CD8-positive, alpha-beta T cell (primary cell): ENCODE measurements at regions of chr1 and their contacts with region 1.

Region 1: DNA sequence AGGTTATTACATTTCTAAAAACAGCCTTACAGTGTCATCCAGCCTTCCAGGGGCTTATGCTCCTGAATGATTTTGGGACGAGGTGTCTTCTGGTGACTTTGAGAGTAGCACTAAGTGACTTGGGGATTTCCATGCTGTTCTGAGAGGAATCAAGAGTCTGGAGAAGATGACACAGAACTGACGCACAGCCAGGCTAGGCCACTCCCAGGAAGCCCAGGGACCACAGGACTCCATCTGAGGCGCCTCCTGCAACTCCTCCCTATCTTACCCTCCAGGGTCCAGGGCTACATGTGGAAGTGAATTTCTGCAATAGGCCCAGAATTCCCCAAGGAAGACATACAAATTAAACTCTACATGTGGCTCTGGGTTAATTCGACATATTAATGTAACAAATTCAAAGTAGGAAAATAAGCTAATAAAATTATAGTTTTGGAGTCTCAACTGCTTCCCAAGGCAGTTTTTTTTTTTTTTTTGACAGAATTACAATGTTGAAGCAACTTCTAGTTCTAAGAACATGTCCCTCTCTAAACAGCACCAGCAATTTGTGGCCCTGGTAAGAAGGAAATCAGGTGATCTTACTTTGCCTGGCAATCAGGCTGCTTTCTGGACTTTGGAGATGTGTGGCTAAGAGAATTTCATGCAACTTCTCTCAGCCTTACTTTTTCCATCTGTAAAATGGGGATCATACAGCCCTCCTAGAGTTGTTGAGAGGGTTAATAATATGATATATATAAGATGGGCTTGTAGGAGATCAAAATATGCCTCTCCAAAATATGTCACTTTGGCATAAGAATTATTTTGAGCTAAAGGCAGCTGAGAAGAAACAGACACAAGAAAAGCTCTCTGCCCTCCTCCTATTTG is 92.3 kb downstream of the SLC25A24 start:
- DNase-seq: peak in 4 of 9 experiments; percentile 17 to 57 (median 40)
- ATAC-seq: peak; percentile 54
- H3K4me3 ChIP-seq: no peak overlapping the region
- H3K4me3 Mint-ChIP-seq: no peak overlapping the region
- H3K27ac ChIP-seq: no peak overlapping the region
- H3K27ac Mint-ChIP-seq: peak overlapping the region; percentile 57
- H3K4me1 ChIP-seq: no peaks in the 10 kb centered on the region
- H3K4me1 Mint-ChIP-seq: peaks cover 4% of the 10 kb centered on the region
- H3K27me3 ChIP-seq: no peaks in the 10 kb centered on the region
- H3K27me3 Mint-ChIP-seq: no peaks in the 10 kb centered on the region
- CTCF ChIP-seq: no peak

Region 2: DNA sequence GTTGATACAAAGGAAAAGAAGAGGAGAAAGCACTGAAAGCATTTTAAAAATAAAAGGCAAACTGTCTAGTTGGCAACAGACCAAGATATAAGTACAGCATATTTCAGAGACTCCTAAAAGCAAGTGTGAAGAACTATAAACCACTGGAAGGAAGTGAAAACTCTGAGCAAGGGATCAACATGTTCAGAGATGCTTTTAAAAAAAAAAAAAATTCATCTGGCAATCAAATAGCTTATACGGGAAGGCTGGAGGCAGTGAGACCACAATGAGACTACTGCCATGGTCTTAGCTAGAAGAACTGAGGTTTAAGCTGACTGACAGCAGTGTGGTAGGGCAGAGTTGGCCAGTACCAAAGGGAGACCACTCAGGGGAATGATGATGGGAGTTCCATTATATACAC is 267.2 kb before region 1 on chr1:
- CTCF ChIA-PET with region 1: no interaction called
- POLR2A ChIA-PET with region 1: no interaction called
- intact Hi-C with region 1: no loop called
- DNase-seq: peak in 2 of 9 experiments; percentile 37 to 63
- ATAC-seq: peak; percentile 50
- H3K4me3 ChIP-seq: peak overlapping the region; percentile 2 to 6
- H3K4me3 Mint-ChIP-seq: peak overlapping the region; percentile 42
- H3K27ac ChIP-seq: peak overlapping the region in 1 of 2 experiments; percentile 73
- H3K27ac Mint-ChIP-seq: peak overlapping the region; percentile 81
- H3K4me1 ChIP-seq: peaks cover 64% of the 10 kb centered on the region
- H3K4me1 Mint-ChIP-seq: peaks cover 87% of the 10 kb centered on the region
- H3K27me3 ChIP-seq: no peaks in the 10 kb centered on the region
- H3K27me3 Mint-ChIP-seq: no peaks in the 10 kb centered on the region
- CTCF ChIP-seq: no peak

Region 3: GRCh38 chr1:108057541-108057940 is 50.3 kb before region 1 on chr1:
- CTCF ChIA-PET with region 1: no interaction called
- POLR2A ChIA-PET with region 1: interaction called, 3 read pairs
- intact Hi-C with region 1: loop called in 1 of 2 experiments (anchors 10 kb)
- DNase-seq: no peak
- ATAC-seq: no peak
- H3K4me3 ChIP-seq: no peak overlapping the region
- H3K4me3 Mint-ChIP-seq: no peak overlapping the region
- H3K27ac ChIP-seq: no peak overlapping the region
- H3K27ac Mint-ChIP-seq: no peak overlapping the region
- H3K4me1 ChIP-seq: no peaks in the 10 kb centered on the region
- H3K4me1 Mint-ChIP-seq: no peaks in the 10 kb centered on the region
- H3K27me3 ChIP-seq: no peaks in the 10 kb centered on the region
- H3K27me3 Mint-ChIP-seq: no peaks in the 10 kb centered on the region
- CTCF ChIP-seq: no peak

Region 4: GRCh38 chr1:108097018-108097417 is 10.9 kb before region 1 on chr1:
- CTCF ChIA-PET with region 1: no interaction called
- POLR2A ChIA-PET with region 1: no interaction called
- intact Hi-C with region 1: no loop called
- DNase-seq: no peak
- ATAC-seq: no peak
- H3K4me3 ChIP-seq: no peak overlapping the region
- H3K4me3 Mint-ChIP-seq: no peak overlapping the region
- H3K27ac ChIP-seq: no peak overlapping the region
- H3K27ac Mint-ChIP-seq: no peak overlapping the region
- H3K4me1 ChIP-seq: no peaks in the 10 kb centered on the region
- H3K4me1 Mint-ChIP-seq: peaks cover 12% of the 10 kb centered on the region
- H3K27me3 ChIP-seq: no peaks in the 10 kb centered on the region
- H3K27me3 Mint-ChIP-seq: no peaks in the 10 kb centered on the region
- CTCF ChIP-seq: no peak

Region 5: DNA sequence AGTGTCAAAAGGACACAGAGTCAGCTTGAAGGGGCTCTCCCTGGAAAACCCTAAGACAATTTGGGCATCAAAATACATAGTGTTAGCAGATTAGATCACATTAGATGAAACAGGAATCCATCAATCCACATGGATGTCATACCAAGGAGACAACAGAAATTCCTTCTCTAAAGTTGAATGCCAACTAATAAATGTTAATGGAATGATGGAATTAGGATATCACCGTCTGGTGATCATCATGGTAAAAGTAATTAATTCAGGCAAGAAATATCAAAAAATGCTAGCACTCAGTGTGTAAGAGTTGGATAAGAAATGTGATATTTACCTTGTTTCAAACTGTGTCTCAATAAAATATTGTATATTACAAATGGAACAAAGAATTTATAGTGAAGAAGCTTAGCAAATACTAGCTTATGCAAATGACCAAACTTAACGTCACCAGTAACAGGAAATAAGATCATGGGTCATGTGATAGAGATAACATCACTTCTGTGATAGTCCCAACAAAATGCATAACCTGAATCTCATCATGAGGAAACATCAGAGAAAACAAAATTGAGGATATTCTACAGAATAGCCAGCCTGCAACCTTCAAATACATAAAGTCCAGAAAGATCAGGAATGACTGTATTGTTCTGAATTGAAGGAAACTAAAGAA is 103.3 kb after region 1 on chr1:
- CTCF ChIA-PET with region 1: no interaction called
- POLR2A ChIA-PET with region 1: no interaction called
- intact Hi-C with region 1: no loop called
- DNase-seq: peak in 1 of 9 experiments; percentile 14
- ATAC-seq: no peak
- H3K4me3 ChIP-seq: no peak overlapping the region
- H3K4me3 Mint-ChIP-seq: no peak overlapping the region
- H3K27ac ChIP-seq: no peak overlapping the region
- H3K27ac Mint-ChIP-seq: no peak overlapping the region
- H3K4me1 ChIP-seq: peaks cover 7% of the 10 kb centered on the region
- H3K4me1 Mint-ChIP-seq: peaks cover 7% of the 10 kb centered on the region
- H3K27me3 ChIP-seq: no peaks in the 10 kb centered on the region
- H3K27me3 Mint-ChIP-seq: peaks cover 33% of the 10 kb centered on the region
- CTCF ChIP-seq: no peak

Region 6: GRCh38 chr1:108881369-108881768 is 773.5 kb after region 1 on chr1:
- CTCF ChIA-PET with region 1: no interaction called
- POLR2A ChIA-PET with region 1: no interaction called
- intact Hi-C with region 1: no loop called
- DNase-seq: no peak
- ATAC-seq: no peak
- H3K4me3 ChIP-seq: no peak overlapping the region
- H3K4me3 Mint-ChIP-seq: no peak overlapping the region
- H3K27ac ChIP-seq: no peak overlapping the region
- H3K27ac Mint-ChIP-seq: no peak overlapping the region
- H3K4me1 ChIP-seq: peaks cover 6% of the 10 kb centered on the region
- H3K4me1 Mint-ChIP-seq: peaks cover 12% of the 10 kb centered on the region
- H3K27me3 ChIP-seq: no peaks in the 10 kb centered on the region
- H3K27me3 Mint-ChIP-seq: peaks cover 4% of the 10 kb centered on the region
- CTCF ChIP-seq: no peak